Activated naive CD8-positive, alpha-beta T cell treated with anti-CD3 and anti-CD28 coated beads, Interleukin-2, amount 10 ng/mL, durations not matched to agents 7 days and 5 days (primary cell): ENCODE measurements at regions of chr10 and their contacts with region 1.

Region 1: GRCh38 chr10:95693668-95694534 is at the start of gene TCTN3:
- DNase-seq: peak; percentile 91
- ATAC-seq: peak; percentile 99
- H3K4me3 Mint-ChIP-seq: peak within 1 kb of the TSS; percentile 94
- H3K27ac Mint-ChIP-seq: peak within 1 kb of the TSS; percentile 88
- H3K4me1 Mint-ChIP-seq: peaks cover 30% of the 10 kb centered on the region
- H3K27me3 Mint-ChIP-seq: peaks cover 2% of the 10 kb centered on the region
- total RNA-seq, gene TCTN3: 16.2 to 21.4 TPM

Region 2: GRCh38 chr10:95650232-95650631 is 43.7 kb before region 1 on chr10:
- POLR2A ChIA-PET with region 1: no interaction called
- DNase-seq: no peak
- ATAC-seq: no peak
- H3K4me3 Mint-ChIP-seq: no peak overlapping the region
- H3K27ac Mint-ChIP-seq: no peak overlapping the region
- H3K4me1 Mint-ChIP-seq: peaks cover 17% of the 10 kb centered on the region
- H3K27me3 Mint-ChIP-seq: no peaks in the 10 kb centered on the region

Region 3: GRCh38 chr10:95841661-95842498 is 148.0 kb after region 1 on chr10:
- POLR2A ChIA-PET with region 1: interaction called, 17 read pairs
- DNase-seq: no peak
- ATAC-seq: peak; percentile 71
- H3K4me3 Mint-ChIP-seq: peak overlapping the region; percentile 59
- H3K27ac Mint-ChIP-seq: peak overlapping the region; percentile 73
- H3K4me1 Mint-ChIP-seq: peaks cover 29% of the 10 kb centered on the region
- H3K27me3 Mint-ChIP-seq: peaks cover 5% of the 10 kb centered on the region

Region 4: GRCh38 chr10:95864906-95865813 is 171.3 kb after region 1 on chr10:
- POLR2A ChIA-PET with region 1: interaction called, 17 read pairs
- DNase-seq: no peak
- ATAC-seq: peak; percentile 92
- H3K4me3 Mint-ChIP-seq: no peak overlapping the region
- H3K27ac Mint-ChIP-seq: peak overlapping the region; percentile 11
- H3K4me1 Mint-ChIP-seq: peaks cover 20% of the 10 kb centered on the region
- H3K27me3 Mint-ChIP-seq: no peaks in the 10 kb centered on the region